ENCODE measurements at regions of chr1 and their contacts with region 1.

Region 1: DNA sequence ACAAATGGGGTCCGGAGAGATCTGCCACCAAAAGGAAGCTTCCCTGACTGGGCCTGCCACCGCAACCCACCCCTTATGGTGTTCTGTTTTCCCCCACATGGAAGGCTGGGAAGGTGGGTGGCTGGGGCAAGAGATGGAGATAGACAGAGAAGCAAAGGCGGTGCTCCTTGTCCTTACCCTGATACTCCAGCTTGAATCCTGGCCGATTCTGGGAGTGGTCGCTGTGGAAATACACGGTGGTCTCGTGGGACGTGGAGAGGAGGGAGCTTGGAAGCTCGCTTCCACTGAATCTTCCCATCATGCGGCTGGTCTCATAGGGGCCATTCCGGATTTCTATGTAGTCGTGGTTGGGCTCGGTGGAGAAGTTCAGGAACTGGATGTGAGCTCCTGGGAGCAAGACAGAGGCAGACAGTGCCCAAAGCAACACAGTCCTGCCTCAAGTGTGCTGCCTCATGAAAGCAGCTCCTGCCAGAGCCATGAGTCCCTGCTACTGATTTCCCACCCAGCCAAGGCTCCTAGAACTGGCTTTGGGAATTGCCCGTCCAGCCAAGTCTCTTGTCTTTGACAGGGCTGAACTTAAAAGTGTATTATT is 138.5 kb downstream of the ZSCAN20 start:
- DNase-seq: no peak
- ATAC-seq: no peak
- H3K4me3 Mint-ChIP-seq: no peak overlapping the region
- H3K27ac Mint-ChIP-seq: no peak overlapping the region
- H3K4me1 Mint-ChIP-seq: no peaks in the 10 kb centered on the region
- H3K27me3 Mint-ChIP-seq: peaks cover 14% of the 10 kb centered on the region
- CTCF ChIP-seq: no peak

Region 2: DNA sequence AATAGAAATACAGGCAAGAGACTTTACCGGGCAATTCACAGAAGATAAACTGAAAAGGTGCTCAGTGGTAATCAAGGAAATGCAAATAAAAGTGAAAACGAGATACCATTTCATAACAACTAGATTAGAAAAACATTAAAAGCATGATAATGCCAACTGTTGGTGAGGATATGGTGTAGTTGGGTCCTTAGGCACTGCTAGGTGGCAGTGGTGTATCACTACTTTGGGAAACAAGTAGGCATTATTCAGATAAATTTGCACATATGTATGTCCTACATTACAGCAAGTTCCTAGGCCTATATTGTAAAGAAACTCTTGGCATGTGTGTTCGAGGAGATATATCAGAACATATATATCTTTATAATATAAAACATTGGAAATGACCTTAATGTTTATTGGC is 499.0 kb before region 1 on chr1:
- CTCF ChIA-PET with region 1: no interaction called
- POLR2A ChIA-PET with region 1: no interaction called
- intact Hi-C with region 1: loop called (anchors 5 kb)
- DNase-seq: no peak
- ATAC-seq: no peak
- H3K4me3 Mint-ChIP-seq: no peak overlapping the region
- H3K27ac Mint-ChIP-seq: no peak overlapping the region
- H3K4me1 Mint-ChIP-seq: no peaks in the 10 kb centered on the region
- H3K27me3 Mint-ChIP-seq: no peaks in the 10 kb centered on the region
- CTCF ChIP-seq: no peak

Measured in activated B cell treated with CpG ODN at 0.5 μM for 24 hours (primary cell).